ENCODE measurements at regions of chr14 and their contacts with region 1.

Region 1: GRCh38 chr14:34895277-34895676 is 20.1 kb upstream of the BAZ1A start:
- DNase-seq: no peak
- H3K4me3 ChIP-seq: no peak overlapping the region
- H3K27ac ChIP-seq: no peak overlapping the region
- H3K4me1 ChIP-seq: no peaks in the 10 kb centered on the region
- H3K27me3 ChIP-seq: no peaks in the 10 kb centered on the region
- CTCF ChIP-seq: no peak
- EP300 ChIP-seq: no peak
- POLR2A ChIP-seq: no peak

Region 2: DNA sequence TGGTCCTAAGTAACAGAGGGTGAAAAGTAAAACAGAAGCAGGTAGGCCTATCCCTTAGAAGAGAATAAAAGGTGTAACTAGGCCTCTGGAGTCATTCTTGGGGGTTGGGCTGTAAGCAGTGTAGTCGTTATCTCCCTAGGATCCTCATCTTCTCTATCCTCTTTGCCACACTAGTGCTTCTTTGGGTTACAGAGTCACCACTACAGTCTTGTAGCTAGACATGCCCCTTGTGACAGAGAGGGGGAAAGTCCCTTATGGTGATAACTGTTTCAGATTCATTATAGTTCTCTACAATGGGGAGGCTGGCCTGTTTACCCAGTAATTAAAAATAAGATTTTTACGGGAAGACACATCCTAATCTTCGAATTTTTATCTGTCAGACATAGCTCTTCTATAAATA is 71.1 kb after region 1 on chr14:
- intact Hi-C with region 1: loop called (anchors 10 kb)
- DNase-seq: no peak
- H3K4me3 ChIP-seq: no peak overlapping the region
- H3K27ac ChIP-seq: no peak overlapping the region
- H3K4me1 ChIP-seq: no peaks in the 10 kb centered on the region
- H3K27me3 ChIP-seq: no peaks in the 10 kb centered on the region
- CTCF ChIP-seq: no peak
- EP300 ChIP-seq: no peak
- POLR2A ChIP-seq: no peak